T-cell (primary cell): ENCODE measurements at regions of chr1 and their contacts with region 1.

Region 1: DNA sequence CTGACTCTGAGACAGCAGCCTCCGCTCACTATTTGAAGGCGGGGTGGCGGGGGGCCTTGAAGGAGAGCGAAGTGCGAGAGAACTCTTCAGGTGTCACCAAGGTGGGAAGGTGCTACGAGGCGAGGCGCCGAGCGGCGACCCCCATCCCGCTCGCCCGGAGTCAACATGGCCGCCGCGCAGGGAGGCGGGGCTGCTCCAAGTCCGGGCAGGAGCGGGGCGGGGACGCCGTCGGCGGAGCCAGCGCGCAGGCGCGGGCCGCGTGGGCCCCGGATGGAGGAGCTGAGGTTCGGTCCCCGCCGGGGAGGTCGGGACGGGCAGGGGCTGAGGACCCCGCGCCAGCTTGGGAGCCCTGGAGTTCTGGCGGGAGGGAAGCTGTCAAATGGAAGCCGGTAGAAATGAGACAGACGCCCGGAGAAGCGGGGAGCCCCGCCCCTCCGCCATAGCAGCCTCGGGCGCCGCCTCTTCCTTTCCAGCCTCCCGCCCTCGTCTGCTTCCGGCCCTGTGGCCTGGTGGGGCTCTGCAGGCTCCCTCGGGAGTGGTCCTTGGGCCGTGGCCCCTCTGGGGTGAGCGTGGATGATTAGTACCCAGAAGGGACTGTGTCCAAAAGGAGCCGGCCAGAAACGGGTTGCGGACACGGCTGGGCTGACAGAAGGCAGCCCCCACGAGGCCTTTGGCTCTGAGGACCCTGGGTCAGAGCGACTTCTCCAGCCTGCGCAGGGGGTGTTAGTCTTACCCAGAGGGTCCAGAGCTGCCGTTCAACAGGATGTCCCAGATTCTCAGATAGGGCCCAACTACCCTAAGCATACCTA is at the start of gene PIGV:
- DNase-seq: peak; percentile 68 to 93 (median 83)
- ATAC-seq: peak; percentile 75 to 80 (median 78)
- H3K4me3 ChIP-seq: peak within 1 kb of the TSS; percentile 82 to 98
- H3K4me3 Mint-ChIP-seq: peak within 1 kb of the TSS; percentile 86 to 100 (median 98)
- H3K27ac ChIP-seq: peak within 1 kb of the TSS; percentile 97
- H3K27ac Mint-ChIP-seq: peak within 1 kb of the TSS; percentile 99 to 100
- H3K4me1 ChIP-seq: peaks cover 23 to 65% of the 10 kb centered on the region in 2 experiments
- H3K4me1 Mint-ChIP-seq: peaks cover 71 to 79% (median 73%) of the 10 kb centered on the region in 3 donors
- H3K27me3 ChIP-seq: no peaks in the 10 kb centered on the region
- H3K27me3 Mint-ChIP-seq: no peaks in the 10 kb centered on the region
- total RNA-seq, gene PIGV: 10.3 to 24.0 (median 20.3) TPM

Region 2: GRCh38 chr1:26500488-26501175 is 287.3 kb before region 1 on chr1:
- CTCF ChIA-PET with region 1: interaction called, 4 to 14 read pairs
- POLR2A ChIA-PET with region 1: no interaction called
- DNase-seq: peak; percentile 64 to 93 (median 81)
- ATAC-seq: peak; percentile 77 to 81 (median 79)
- H3K4me3 ChIP-seq: peak overlapping the region; percentile 88 to 89
- H3K4me3 Mint-ChIP-seq: peak overlapping the region; percentile 77 to 86 (median 86)
- H3K27ac ChIP-seq: peak overlapping the region; percentile 92
- H3K27ac Mint-ChIP-seq: peak overlapping the region; percentile 93 to 94
- H3K4me1 ChIP-seq: peaks cover 5 to 24% of the 10 kb centered on the region in 2 experiments
- H3K4me1 Mint-ChIP-seq: peaks cover 7 to 17% (median 12%) of the 10 kb centered on the region in 3 donors
- H3K27me3 ChIP-seq: no peaks in the 10 kb centered on the region
- H3K27me3 Mint-ChIP-seq: no peaks in the 10 kb centered on the region

Region 3: GRCh38 chr1:26602378-26602959 is 185.4 kb before region 1 on chr1:
- CTCF ChIA-PET with region 1: interaction called, 31 to 156 read pairs
- POLR2A ChIA-PET with region 1: interaction called, 4 to 6 read pairs
- DNase-seq: peak in 18 of 35 experiments; percentile 5 to 83 (median 22)
- ATAC-seq: peak in 2 of 4 experiments; percentile 48 to 55
- H3K4me3 ChIP-seq: no peak overlapping the region
- H3K4me3 Mint-ChIP-seq: no peak overlapping the region
- H3K27ac ChIP-seq: no peak overlapping the region
- H3K27ac Mint-ChIP-seq: no peak overlapping the region
- H3K4me1 ChIP-seq: peaks cover 0 to 5% of the 10 kb centered on the region in 2 experiments
- H3K4me1 Mint-ChIP-seq: peaks cover 4 to 9% (median 8%) of the 10 kb centered on the region in 3 donors
- H3K27me3 ChIP-seq: peaks cover 0 to 2% of the 10 kb centered on the region in 2 experiments
- H3K27me3 Mint-ChIP-seq: peaks cover 0 to 1% of the 10 kb centered on the region in 2 donors

Region 4: DNA sequence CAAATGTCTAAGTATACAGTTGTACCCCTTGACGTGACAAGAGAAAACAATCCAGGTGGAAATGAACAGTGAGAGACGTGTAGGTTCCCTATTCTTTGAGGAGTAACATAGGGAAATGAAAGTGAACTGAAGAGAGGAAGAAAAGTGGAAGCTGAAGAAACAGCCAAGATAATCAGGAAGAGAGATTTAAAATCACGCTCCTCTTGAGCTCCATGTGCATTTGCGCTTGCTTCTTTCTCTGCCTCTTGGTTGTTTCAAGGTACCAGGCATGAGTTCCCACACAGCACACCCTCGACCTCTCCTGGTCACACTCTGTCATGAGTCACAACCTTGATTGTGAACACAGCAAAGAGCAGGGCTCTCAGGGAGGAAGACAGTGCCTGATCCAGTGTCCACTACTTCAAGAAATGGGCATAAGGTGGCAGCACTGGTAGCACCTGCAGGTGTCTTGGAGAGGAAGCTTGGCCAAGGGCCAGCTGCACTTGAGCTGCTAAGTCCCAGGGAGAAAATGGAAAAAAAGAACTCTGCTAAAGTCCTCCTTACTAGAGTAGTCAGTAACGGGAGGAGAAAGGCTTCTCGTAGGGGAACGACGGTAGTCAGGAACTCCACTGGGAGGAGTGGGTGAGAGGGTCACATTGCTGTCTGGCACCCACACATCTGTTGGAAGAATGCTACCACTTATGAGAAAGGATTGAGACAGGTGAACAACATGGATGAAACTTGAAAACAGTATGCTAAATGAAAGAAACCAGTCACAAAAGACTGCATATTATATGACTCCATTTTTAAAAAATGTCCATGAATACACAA is 110.4 kb before region 1 on chr1:
- CTCF ChIA-PET with region 1: interaction called, 3 to 19 read pairs
- POLR2A ChIA-PET with region 1: no interaction called
- DNase-seq: peak; percentile 17 to 79 (median 43)
- ATAC-seq: peak; percentile 88 to 99 (median 94)
- H3K4me3 ChIP-seq: no peak overlapping the region
- H3K4me3 Mint-ChIP-seq: peak overlapping the region; percentile 37 to 58 (median 58)
- H3K27ac ChIP-seq: peak overlapping the region; percentile 38
- H3K27ac Mint-ChIP-seq: peak overlapping the region; percentile 80 to 81
- H3K4me1 ChIP-seq: peaks cover 7 to 8% of the 10 kb centered on the region in 2 experiments
- H3K4me1 Mint-ChIP-seq: peaks cover 18 to 20% (median 19%) of the 10 kb centered on the region in 3 donors
- H3K27me3 ChIP-seq: no peaks in the 10 kb centered on the region
- H3K27me3 Mint-ChIP-seq: no peaks in the 10 kb centered on the region

Region 5: DNA sequence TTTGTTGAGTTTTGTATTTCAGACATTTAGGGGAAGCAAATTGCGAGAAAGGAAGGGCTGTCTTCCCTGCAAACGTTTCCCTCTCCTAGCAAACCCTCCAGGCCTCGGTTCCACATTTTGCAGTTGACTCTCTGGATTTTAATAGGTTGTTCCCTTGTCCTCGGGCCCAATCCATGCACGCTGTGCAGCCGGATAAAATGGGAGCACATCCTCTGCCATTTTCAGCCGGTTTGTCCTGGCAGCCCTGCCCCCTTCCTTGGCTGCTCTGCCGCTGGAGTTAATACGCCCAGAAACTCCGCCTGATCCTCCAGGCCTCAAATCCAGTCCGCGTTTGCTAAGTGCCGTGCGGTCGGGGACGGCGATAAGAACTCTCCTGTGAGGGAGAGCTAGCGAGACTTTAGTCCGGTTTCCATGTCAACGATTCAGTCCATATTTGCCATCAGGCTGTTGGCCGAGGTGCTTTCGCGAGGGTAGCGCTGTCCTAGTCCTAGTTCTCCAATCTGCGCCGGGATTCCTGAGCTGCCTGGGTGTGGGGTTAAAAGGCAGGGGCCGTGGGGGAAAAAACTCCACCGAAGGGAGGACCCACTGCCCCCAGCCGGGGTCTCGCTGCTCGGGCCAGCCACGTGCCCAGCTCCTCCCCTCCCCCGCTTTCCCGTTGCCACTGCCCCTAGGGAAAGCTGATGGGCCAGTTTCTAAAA is 95.0 kb before region 1 on chr1:
- CTCF ChIA-PET with region 1: interaction called in 1 of 2 experiments, 32 read pairs
- POLR2A ChIA-PET with region 1: interaction called in 1 of 2 experiments, 7 read pairs
- DNase-seq: peak; percentile 70 to 93 (median 82)
- ATAC-seq: peak; percentile 32 to 38 (median 36)
- H3K4me3 ChIP-seq: peak overlapping the region; percentile 66 to 96
- H3K4me3 Mint-ChIP-seq: peak overlapping the region in 2 of 3 donors; percentile 92 to 94
- H3K27ac ChIP-seq: peak overlapping the region; percentile 79
- H3K27ac Mint-ChIP-seq: peak overlapping the region; percentile 93 to 97
- H3K4me1 ChIP-seq: peaks cover 18 to 34% of the 10 kb centered on the region in 2 experiments
- H3K4me1 Mint-ChIP-seq: peaks cover 31 to 38% (median 34%) of the 10 kb centered on the region in 3 donors
- H3K27me3 ChIP-seq: no peaks in the 10 kb centered on the region
- H3K27me3 Mint-ChIP-seq: no peaks in the 10 kb centered on the region

Region 6: GRCh38 chr1:26697978-26698849 is 89.7 kb before region 1 on chr1:
- CTCF ChIA-PET with region 1: interaction called in 1 of 2 experiments, 32 read pairs
- POLR2A ChIA-PET with region 1: interaction called in 1 of 2 experiments, 4 read pairs
- DNase-seq: peak in 31 of 35 experiments; percentile 3 to 81 (median 31)
- ATAC-seq: peak in 3 of 4 experiments; percentile 6 to 44 (median 13)
- H3K4me3 ChIP-seq: peak overlapping the region; percentile 86 to 88
- H3K4me3 Mint-ChIP-seq: no peak overlapping the region
- H3K27ac ChIP-seq: peak overlapping the region; percentile 61
- H3K27ac Mint-ChIP-seq: no peak overlapping the region
- H3K4me1 ChIP-seq: peaks cover 44 to 61% of the 10 kb centered on the region in 2 experiments
- H3K4me1 Mint-ChIP-seq: peaks cover 18 to 20% (median 19%) of the 10 kb centered on the region in 3 donors
- H3K27me3 ChIP-seq: no peaks in the 10 kb centered on the region
- H3K27me3 Mint-ChIP-seq: no peaks in the 10 kb centered on the region

Region 7: GRCh38 chr1:26744075-26744959 is 43.6 kb before region 1 on chr1:
- CTCF ChIA-PET with region 1: interaction called in 1 of 2 experiments, 28 read pairs
- POLR2A ChIA-PET with region 1: interaction called in 1 of 2 experiments, 12 read pairs
- DNase-seq: peak; percentile 49 to 90 (median 73)
- ATAC-seq: peak; percentile 93 to 95 (median 94)
- H3K4me3 ChIP-seq: peak overlapping the region; percentile 13 to 21
- H3K4me3 Mint-ChIP-seq: peak overlapping the region; percentile 46 to 62 (median 52)
- H3K27ac ChIP-seq: peak overlapping the region; percentile 90
- H3K27ac Mint-ChIP-seq: peak overlapping the region; percentile 89 to 94
- H3K4me1 ChIP-seq: peaks cover 58 to 78% of the 10 kb centered on the region in 2 experiments
- H3K4me1 Mint-ChIP-seq: peaks cover 80 to 93% (median 89%) of the 10 kb centered on the region in 3 donors
- H3K27me3 ChIP-seq: no peaks in the 10 kb centered on the region
- H3K27me3 Mint-ChIP-seq: no peaks in the 10 kb centered on the region